CD4-positive, alpha-beta T cell (primary cell): ENCODE measurements at regions of chr13 and their contacts with region 1.

Region 1: GRCh38 chr13:114132419-114133121 is at the start of gene RASA3:
- DNase-seq: peak; percentile 37 to 85 (median 60)
- ATAC-seq: peak; percentile 31
- H3K4me3 ChIP-seq: peak within 1 kb of the TSS; percentile 100
- H3K4me3 Mint-ChIP-seq: peak within 1 kb of the TSS; percentile 99
- H3K27ac ChIP-seq: peak within 1 kb of the TSS; percentile 80 to 85
- H3K27ac Mint-ChIP-seq: peak within 1 kb of the TSS; percentile 99
- H3K4me1 ChIP-seq: peaks cover 50% of the 10 kb centered on the region
- H3K4me1 Mint-ChIP-seq: peaks cover 60% of the 10 kb centered on the region
- H3K27me3 ChIP-seq: no peaks in the 10 kb centered on the region
- H3K27me3 Mint-ChIP-seq: no peaks in the 10 kb centered on the region
- CTCF ChIP-seq: no peak
- total RNA-seq, gene RASA3: 181 to 184 TPM

Region 2: DNA sequence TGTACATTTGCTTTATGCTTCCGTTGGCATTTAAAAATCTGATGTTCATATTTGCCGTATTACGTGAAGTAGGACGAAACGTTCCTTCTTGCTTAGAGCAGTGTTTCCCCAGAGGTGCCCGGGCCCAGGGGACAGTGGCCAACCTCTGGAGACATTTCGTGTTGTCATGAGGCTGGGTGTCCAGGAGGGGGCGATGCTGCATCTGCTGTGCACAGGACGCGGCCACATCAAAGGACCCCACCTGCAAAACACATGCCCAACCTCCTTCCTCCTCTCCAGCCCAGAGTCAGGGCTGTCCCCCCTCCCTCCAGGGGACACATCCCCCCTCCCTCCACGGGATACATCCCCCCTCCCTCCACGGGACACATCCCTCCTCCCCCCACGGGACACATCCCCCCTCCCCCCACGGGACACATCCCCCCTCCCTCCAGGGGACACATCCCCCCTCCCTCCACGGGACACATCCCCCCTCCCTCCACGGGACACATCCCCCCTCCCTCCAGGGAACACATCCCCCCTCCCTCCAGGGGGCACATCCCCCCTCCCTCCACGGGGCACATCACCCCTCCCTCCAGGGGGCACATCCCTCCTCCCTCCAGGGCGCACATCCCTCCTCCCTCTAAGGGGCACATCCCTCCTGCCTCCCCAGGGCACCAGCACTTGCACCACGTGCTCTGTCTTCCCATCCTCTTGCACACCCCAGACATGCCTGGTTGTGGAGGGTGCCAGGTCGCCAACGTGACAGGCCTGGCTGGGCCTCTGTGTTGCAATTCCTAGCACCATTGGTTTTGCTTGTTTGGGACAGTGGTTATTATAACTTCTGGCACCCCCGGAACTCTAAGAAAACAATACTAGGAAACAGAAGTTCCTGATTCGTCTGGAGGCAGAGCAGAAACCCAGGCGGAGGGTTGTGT is 315.4 kb before region 1 on chr13:
- CTCF ChIA-PET with region 1: no interaction called
- POLR2A ChIA-PET with region 1: no interaction called
- intact Hi-C with region 1: loop called in 1 of 2 experiments (anchors 5 kb)
- DNase-seq: peak; percentile 77 to 93 (median 86)
- ATAC-seq: peak; percentile 94
- H3K4me3 ChIP-seq: no peak overlapping the region
- H3K4me3 Mint-ChIP-seq: peak overlapping the region; percentile 87
- H3K27ac ChIP-seq: no peak overlapping the region
- H3K27ac Mint-ChIP-seq: peak overlapping the region; percentile 61
- H3K4me1 ChIP-seq: peaks cover 17% of the 10 kb centered on the region
- H3K4me1 Mint-ChIP-seq: peaks cover 23% of the 10 kb centered on the region
- H3K27me3 ChIP-seq: no peaks in the 10 kb centered on the region
- H3K27me3 Mint-ChIP-seq: no peaks in the 10 kb centered on the region
- CTCF ChIP-seq: peak; percentile 77

Region 3: GRCh38 chr13:114110091-114110829 is 22.3 kb before region 1 on chr13:
- CTCF ChIA-PET with region 1: interaction called, 15 read pairs
- POLR2A ChIA-PET with region 1: interaction called, 65 read pairs
- intact Hi-C with region 1: no loop called
- DNase-seq: peak; percentile 69 to 92 (median 80)
- ATAC-seq: peak; percentile 87
- H3K4me3 ChIP-seq: peak overlapping the region; percentile 45
- H3K4me3 Mint-ChIP-seq: peak overlapping the region; percentile 81
- H3K27ac ChIP-seq: peak overlapping the region; percentile 55 to 63
- H3K27ac Mint-ChIP-seq: peak overlapping the region; percentile 98
- H3K4me1 ChIP-seq: peaks cover 94% of the 10 kb centered on the region
- H3K4me1 Mint-ChIP-seq: peaks cover 85% of the 10 kb centered on the region
- H3K27me3 ChIP-seq: no peaks in the 10 kb centered on the region
- H3K27me3 Mint-ChIP-seq: no peaks in the 10 kb centered on the region
- CTCF ChIP-seq: peak; percentile 67

Region 4: GRCh38 chr13:114151565-114152284 is 19.2 kb after region 1 on chr13:
- CTCF ChIA-PET with region 1: interaction called, 5 read pairs
- POLR2A ChIA-PET with region 1: interaction called, 138 read pairs
- intact Hi-C with region 1: loop called in 1 of 2 experiments (anchors 1 kb)
- DNase-seq: peak in 13 of 14 experiments; percentile 54 to 82 (median 67)
- ATAC-seq: peak; percentile 31
- H3K4me3 ChIP-seq: peak overlapping the region; percentile 28
- H3K4me3 Mint-ChIP-seq: peak overlapping the region; percentile 81
- H3K27ac ChIP-seq: peak overlapping the region; percentile 79 to 92
- H3K27ac Mint-ChIP-seq: peak overlapping the region; percentile 95
- H3K4me1 ChIP-seq: peaks cover 84% of the 10 kb centered on the region
- H3K4me1 Mint-ChIP-seq: peaks cover 80% of the 10 kb centered on the region
- H3K27me3 ChIP-seq: no peaks in the 10 kb centered on the region
- H3K27me3 Mint-ChIP-seq: no peaks in the 10 kb centered on the region
- CTCF ChIP-seq: no peak

Region 5: GRCh38 chr13:114226699-114227323 is 94.2 kb after region 1 on chr13:
- CTCF ChIA-PET with region 1: interaction called, 3 read pairs
- POLR2A ChIA-PET with region 1: interaction called, 28 read pairs
- intact Hi-C with region 1: loop called (anchors 1 to 2 kb)
- DNase-seq: peak; percentile 73 to 92 (median 84)
- ATAC-seq: peak; percentile 79
- H3K4me3 ChIP-seq: peak overlapping the region; percentile 15
- H3K4me3 Mint-ChIP-seq: peak overlapping the region; percentile 31
- H3K27ac ChIP-seq: no peak overlapping the region
- H3K27ac Mint-ChIP-seq: peak overlapping the region; percentile 94
- H3K4me1 ChIP-seq: peaks cover 36% of the 10 kb centered on the region
- H3K4me1 Mint-ChIP-seq: peaks cover 49% of the 10 kb centered on the region
- H3K27me3 ChIP-seq: no peaks in the 10 kb centered on the region
- H3K27me3 Mint-ChIP-seq: no peaks in the 10 kb centered on the region
- CTCF ChIP-seq: peak; percentile 95